Caco-2 (cell line): ENCODE measurements at regions of chr1 and their contacts with region 1.

Region 1: GRCh38 chr1:34742667-34743270 is 12.1 kb upstream of the GJB5 start:
- DNase-seq: peak; percentile 80 to 89
- H3K4me3 ChIP-seq: peak overlapping the region; percentile 16; the same call in 1 of the 2 replicates
- H3K4me3 Mint-ChIP-seq: peak overlapping the region; percentile 57
- H3K27ac Mint-ChIP-seq: no peak overlapping the region
- H3K4me1 ChIP-seq: peaks cover 10% of the 10 kb centered on the region
- H3K4me1 Mint-ChIP-seq: peaks cover 10% of the 10 kb centered on the region
- H3K27me3 ChIP-seq: no peaks in the 10 kb centered on the region
- H3K27me3 Mint-ChIP-seq: no peaks in the 10 kb centered on the region
- CTCF ChIP-seq: peak; percentile 78 to 86

Region 2: GRCh38 chr1:33633019-33633801 is 1109.6 kb before region 1 on chr1:
- CTCF ChIA-PET with region 1: interaction called, 13 read pairs
- POLR2A ChIA-PET with region 1: no interaction called
- intact Hi-C with region 1: no loop called
- DNase-seq: peak; percentile 81 to 82
- H3K4me3 ChIP-seq: no peak overlapping the region; the same call in 1 of the 2 replicates
- H3K4me3 Mint-ChIP-seq: no peak overlapping the region
- H3K27ac Mint-ChIP-seq: no peak overlapping the region
- H3K4me1 ChIP-seq: no peaks in the 10 kb centered on the region
- H3K4me1 Mint-ChIP-seq: no peaks in the 10 kb centered on the region
- H3K27me3 ChIP-seq: no peaks in the 10 kb centered on the region
- H3K27me3 Mint-ChIP-seq: peaks cover 22% of the 10 kb centered on the region
- CTCF ChIP-seq: peak; percentile 78 to 98

Region 3: GRCh38 chr1:34113887-34114286 is 628.9 kb before region 1 on chr1:
- CTCF ChIA-PET with region 1: no interaction called
- POLR2A ChIA-PET with region 1: no interaction called
- intact Hi-C with region 1: loop called (anchors 5 kb)
- DNase-seq: peak in 1 of 2 experiments; percentile 9
- H3K4me3 ChIP-seq: no peak overlapping the region
- H3K4me3 Mint-ChIP-seq: no peak overlapping the region
- H3K27ac Mint-ChIP-seq: no peak overlapping the region
- H3K4me1 ChIP-seq: no peaks in the 10 kb centered on the region
- H3K4me1 Mint-ChIP-seq: no peaks in the 10 kb centered on the region
- H3K27me3 ChIP-seq: no peaks in the 10 kb centered on the region
- H3K27me3 Mint-ChIP-seq: no peaks in the 10 kb centered on the region
- CTCF ChIP-seq: peak in 1 of 2 experiments; percentile 8

Region 4: GRCh38 chr1:34597877-34598514 is 144.8 kb before region 1 on chr1:
- CTCF ChIA-PET with region 1: interaction called, 3 read pairs
- POLR2A ChIA-PET with region 1: no interaction called
- intact Hi-C with region 1: loop called (anchors 5 kb)
- DNase-seq: peak; percentile 58 to 73
- H3K4me3 ChIP-seq: no peak overlapping the region
- H3K4me3 Mint-ChIP-seq: no peak overlapping the region
- H3K27ac Mint-ChIP-seq: no peak overlapping the region
- H3K4me1 ChIP-seq: no peaks in the 10 kb centered on the region
- H3K4me1 Mint-ChIP-seq: no peaks in the 10 kb centered on the region
- H3K27me3 ChIP-seq: no peaks in the 10 kb centered on the region
- H3K27me3 Mint-ChIP-seq: peaks cover 6% of the 10 kb centered on the region
- CTCF ChIP-seq: peak; percentile 72 to 77

Region 5: DNA sequence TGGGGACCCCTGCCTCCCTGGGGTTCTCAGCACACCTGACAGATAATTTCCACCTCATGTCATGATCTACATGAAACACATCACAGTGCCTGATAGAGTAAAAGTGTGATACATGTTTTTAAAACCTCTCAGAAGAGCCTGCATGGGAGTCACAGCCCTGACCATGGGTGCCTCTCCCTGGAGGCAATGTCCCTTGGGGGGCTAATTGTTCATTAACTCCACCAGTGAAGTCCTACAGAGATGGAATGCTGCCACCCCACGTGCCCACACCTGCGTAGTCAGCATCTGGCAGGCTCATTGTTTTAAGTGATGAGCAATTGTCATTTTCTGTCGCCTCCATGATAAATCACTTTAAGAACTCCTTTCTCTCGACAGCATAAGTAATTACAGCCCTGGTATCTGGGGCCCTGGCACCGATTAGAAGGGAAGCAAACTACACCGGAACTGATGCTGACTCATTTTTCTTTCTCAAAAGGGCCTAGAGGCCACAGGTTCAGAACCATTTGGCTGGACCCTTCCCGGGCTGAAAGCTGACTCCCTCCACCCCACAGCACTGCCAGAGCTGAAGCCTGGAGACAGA is 97.6 kb before region 1 on chr1:
- CTCF ChIA-PET with region 1: no interaction called
- POLR2A ChIA-PET with region 1: no interaction called
- intact Hi-C with region 1: loop called (anchors 5 kb)
- DNase-seq: no peak
- H3K4me3 ChIP-seq: no peak overlapping the region
- H3K4me3 Mint-ChIP-seq: no peak overlapping the region
- H3K27ac Mint-ChIP-seq: no peak overlapping the region
- H3K4me1 ChIP-seq: no peaks in the 10 kb centered on the region
- H3K4me1 Mint-ChIP-seq: no peaks in the 10 kb centered on the region
- H3K27me3 ChIP-seq: no peaks in the 10 kb centered on the region
- H3K27me3 Mint-ChIP-seq: peaks cover 14% of the 10 kb centered on the region
- CTCF ChIP-seq: no peak

Region 6: GRCh38 chr1:34681480-34682451 is 61.0 kb before region 1 on chr1:
- CTCF ChIA-PET with region 1: interaction called, 5 read pairs
- POLR2A ChIA-PET with region 1: no interaction called
- intact Hi-C with region 1: loop called (anchors 2 kb)
- DNase-seq: peak; percentile 57 to 65
- H3K4me3 ChIP-seq: no peak overlapping the region
- H3K4me3 Mint-ChIP-seq: no peak overlapping the region
- H3K27ac Mint-ChIP-seq: no peak overlapping the region
- H3K4me1 ChIP-seq: peaks cover 16% of the 10 kb centered on the region
- H3K4me1 Mint-ChIP-seq: no peaks in the 10 kb centered on the region
- H3K27me3 ChIP-seq: no peaks in the 10 kb centered on the region
- H3K27me3 Mint-ChIP-seq: no peaks in the 10 kb centered on the region
- CTCF ChIP-seq: peak; percentile 57 to 68